Mammary epithelial cell (primary cell): ENCODE measurements at regions of chr11 and their contacts with region 1.

Region 1: DNA sequence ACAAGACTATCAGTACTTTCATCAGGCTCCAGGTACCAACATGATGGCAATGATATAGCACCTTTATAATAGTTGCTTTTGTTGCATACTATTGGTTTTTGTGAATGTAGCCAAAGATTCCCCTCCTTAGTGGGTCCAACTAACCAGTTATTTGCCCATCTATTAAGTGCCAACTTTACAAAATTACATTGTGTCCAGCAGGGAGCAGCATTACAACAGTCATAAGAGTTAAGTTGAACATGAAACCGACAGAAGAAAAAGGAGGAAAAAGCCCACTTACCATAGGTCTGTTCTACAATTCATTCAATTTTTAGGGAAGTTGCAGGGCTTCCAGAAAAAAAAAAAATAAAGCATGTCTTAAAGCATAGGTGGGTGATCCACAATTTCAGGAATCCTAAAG is 21.6 kb downstream of the IMMP1L start:
- DNase-seq: peak; percentile 18
- H3K4me3 ChIP-seq: no peak overlapping the region
- H3K27ac ChIP-seq: no peak overlapping the region
- H3K4me1 ChIP-seq: no peaks in the 10 kb centered on the region
- H3K27me3 ChIP-seq: no peaks in the 10 kb centered on the region
- CTCF ChIP-seq: peak; percentile 27 to 48

Region 2: GRCh38 chr11:31958076-31958735 is 470.4 kb after region 1 on chr11:
- CTCF ChIA-PET with region 1: no interaction called
- dilution Hi-C with region 1: no loop called
- in situ Hi-C with region 1: no loop called
- intact Hi-C with region 1: loop called (anchors 5 kb)
- DNase-seq: peak; percentile 37
- H3K4me3 ChIP-seq: no peak overlapping the region
- H3K27ac ChIP-seq: no peak overlapping the region
- H3K4me1 ChIP-seq: peaks cover 6% of the 10 kb centered on the region
- H3K27me3 ChIP-seq: no peaks in the 10 kb centered on the region
- CTCF ChIP-seq: peak; percentile 64 to 79

Region 3: DNA sequence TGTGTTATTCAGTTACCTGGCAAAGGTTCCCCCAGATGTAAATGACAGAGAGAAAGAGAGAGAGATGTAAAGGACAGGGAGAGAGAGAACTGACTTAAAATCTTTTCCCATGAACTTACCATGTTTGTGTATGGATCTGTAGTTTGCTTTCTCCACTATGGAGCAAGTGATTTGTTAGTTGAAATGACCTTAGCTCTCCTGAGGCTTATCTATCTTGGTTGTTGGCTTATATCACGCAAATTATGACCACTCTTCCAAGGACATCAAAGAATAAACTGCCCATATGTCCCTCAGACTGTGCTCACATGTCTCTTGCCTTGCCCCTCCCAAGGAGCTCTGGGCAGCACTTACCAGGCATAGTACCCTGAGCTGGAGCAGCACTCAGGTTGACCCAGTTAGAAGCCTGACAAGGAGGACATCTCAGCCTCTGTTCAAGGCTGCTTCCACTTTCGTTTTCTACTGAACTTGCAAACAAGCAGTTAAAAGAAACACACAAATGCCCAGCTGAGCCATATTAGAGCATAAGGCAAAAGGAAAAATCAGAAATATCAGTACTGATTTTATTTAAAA is 507.8 kb after region 1 on chr11:
- CTCF ChIA-PET with region 1: no interaction called
- dilution Hi-C with region 1: no loop called
- in situ Hi-C with region 1: loop called in 1 of 2 experiments (anchors 25 kb)
- intact Hi-C with region 1: no loop called
- DNase-seq: no peak
- H3K4me3 ChIP-seq: no peak overlapping the region
- H3K27ac ChIP-seq: no peak overlapping the region
- H3K4me1 ChIP-seq: no peaks in the 10 kb centered on the region
- H3K27me3 ChIP-seq: no peaks in the 10 kb centered on the region
- CTCF ChIP-seq: no peak

Region 4: GRCh38 chr11:32006799-32007388 is 519.0 kb after region 1 on chr11:
- CTCF ChIA-PET with region 1: no interaction called
- dilution Hi-C with region 1: no loop called
- in situ Hi-C with region 1: no loop called
- intact Hi-C with region 1: loop called (anchors 2 kb)
- DNase-seq: peak; percentile 38
- H3K4me3 ChIP-seq: no peak overlapping the region
- H3K27ac ChIP-seq: no peak overlapping the region
- H3K4me1 ChIP-seq: peaks cover 8% of the 10 kb centered on the region
- H3K27me3 ChIP-seq: no peaks in the 10 kb centered on the region
- CTCF ChIP-seq: peak; percentile 62 to 85